ENCODE measurements at regions of chr14 and their contacts with region 1.

Region 1: GRCh38 chr14:24108336-24108874 is 6.2 kb upstream of the DCAF11 start:
- DNase-seq: no peak
- ATAC-seq: peak; percentile 25
- H3K4me3 ChIP-seq: no peak overlapping the region
- H3K4me3 Mint-ChIP-seq: peak overlapping the region; percentile 83
- H3K27ac ChIP-seq: peak overlapping the region; percentile 28 to 39
- H3K27ac Mint-ChIP-seq: peak overlapping the region; percentile 95
- H3K4me1 ChIP-seq: peaks cover 20% of the 10 kb centered on the region
- H3K4me1 Mint-ChIP-seq: peaks cover 10% of the 10 kb centered on the region
- H3K27me3 ChIP-seq: no peaks in the 10 kb centered on the region
- H3K27me3 Mint-ChIP-seq: no peaks in the 10 kb centered on the region
- CTCF ChIP-seq: no peak

Region 2: DNA sequence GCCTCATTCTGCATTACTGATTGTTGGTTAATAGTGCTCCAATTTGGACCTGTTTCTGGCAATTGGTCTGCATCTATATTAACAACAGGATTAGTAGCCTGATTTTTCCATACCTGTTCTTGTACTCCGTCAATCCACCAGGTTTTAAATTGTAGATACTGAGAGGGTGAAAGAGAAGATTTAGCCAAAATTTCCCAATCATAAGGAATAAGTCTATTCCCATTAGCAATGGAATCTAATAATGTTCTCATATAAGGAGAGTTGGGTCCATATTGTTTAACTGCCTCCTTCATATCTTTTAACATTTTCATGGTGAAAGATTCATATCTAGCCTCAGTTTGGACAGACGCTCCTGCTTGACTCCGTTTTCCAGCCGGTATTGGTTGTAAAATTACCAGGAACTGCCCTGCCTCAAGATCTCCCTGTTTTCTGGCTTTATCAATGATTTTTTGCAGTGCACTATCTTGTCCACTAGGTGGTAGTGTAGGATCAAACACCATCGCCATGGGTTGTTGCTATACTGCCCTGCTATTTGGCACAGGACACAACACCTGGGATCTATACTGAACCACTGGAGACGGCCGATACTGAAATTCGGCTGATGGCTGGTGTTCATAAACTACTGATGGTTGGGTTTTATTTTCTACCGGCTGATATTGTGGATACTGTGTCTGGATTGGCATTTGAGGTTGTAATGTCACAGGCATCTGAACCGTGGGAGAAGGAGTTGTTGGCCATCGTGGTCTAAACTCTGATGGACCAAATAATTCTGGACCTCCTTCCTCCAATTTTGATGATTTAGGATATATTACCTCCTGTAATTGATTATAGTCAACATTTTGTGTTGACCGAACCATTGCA is 94.5 kb before region 1 on chr14:
- CTCF ChIA-PET with region 1: interaction called, 11 read pairs
- POLR2A ChIA-PET with region 1: interaction called, 9 read pairs
- intact Hi-C with region 1: loop called (anchors 1 kb)
- DNase-seq: peak in 12 of 14 experiments; percentile 9 to 85 (median 32)
- ATAC-seq: peak; percentile 98
- H3K4me3 ChIP-seq: no peak overlapping the region
- H3K4me3 Mint-ChIP-seq: no peak overlapping the region
- H3K27ac ChIP-seq: no peak overlapping the region
- H3K27ac Mint-ChIP-seq: no peak overlapping the region
- H3K4me1 ChIP-seq: peaks cover 11% of the 10 kb centered on the region
- H3K4me1 Mint-ChIP-seq: peaks cover 25% of the 10 kb centered on the region
- H3K27me3 ChIP-seq: no peaks in the 10 kb centered on the region
- H3K27me3 Mint-ChIP-seq: no peaks in the 10 kb centered on the region
- CTCF ChIP-seq: peak; percentile 92

Region 3: DNA sequence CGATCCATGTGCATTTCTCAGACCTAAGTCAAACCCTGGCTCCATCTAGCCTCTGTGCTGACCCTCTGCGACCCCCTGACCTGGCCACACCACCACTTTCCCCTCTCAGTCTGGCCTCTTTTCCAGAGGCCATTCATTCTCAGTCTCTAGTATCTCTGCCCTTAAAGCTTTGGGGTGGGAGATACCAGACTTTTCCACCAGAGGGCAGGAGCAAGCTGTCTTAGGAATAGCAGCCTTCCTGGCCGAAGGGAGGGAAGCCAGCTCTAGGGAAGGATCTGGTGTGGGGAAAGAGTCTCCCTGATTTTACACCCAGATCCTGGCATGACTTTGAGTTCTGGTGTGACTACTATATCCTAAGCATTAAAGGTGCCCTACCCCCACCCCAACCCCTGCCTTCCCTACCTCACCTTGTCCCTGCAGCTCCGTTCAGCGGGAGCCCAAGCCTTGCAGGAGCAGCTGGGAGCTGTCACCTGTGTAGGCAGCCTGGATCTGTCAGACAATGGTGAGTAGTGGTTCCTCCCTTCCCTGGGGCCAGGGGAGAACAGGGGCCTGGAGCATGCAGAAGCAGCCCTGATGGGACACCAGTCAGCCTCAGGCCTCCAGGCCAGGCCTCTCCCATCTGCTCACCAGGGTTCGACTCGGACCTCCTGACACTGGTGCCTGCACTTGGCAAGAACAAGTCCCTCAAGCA is 50.0 kb before region 1 on chr14:
- CTCF ChIA-PET with region 1: interaction called, 5 read pairs
- POLR2A ChIA-PET with region 1: interaction called, 22 read pairs
- intact Hi-C with region 1: loop called (anchors 1 kb)
- DNase-seq: peak in 6 of 14 experiments; percentile 30 to 82 (median 48)
- ATAC-seq: peak; percentile 83
- H3K4me3 ChIP-seq: no peak overlapping the region
- H3K4me3 Mint-ChIP-seq: no peak overlapping the region
- H3K27ac ChIP-seq: no peak overlapping the region
- H3K27ac Mint-ChIP-seq: no peak overlapping the region
- H3K4me1 ChIP-seq: peaks cover 2% of the 10 kb centered on the region
- H3K4me1 Mint-ChIP-seq: no peaks in the 10 kb centered on the region
- H3K27me3 ChIP-seq: peaks cover 0 to 10% of the 10 kb centered on the region in 2 experiments
- H3K27me3 Mint-ChIP-seq: peaks cover 10% of the 10 kb centered on the region
- CTCF ChIP-seq: peak; percentile 70

Region 4: GRCh38 chr14:24093901-24094761 is 14.3 kb before region 1 on chr14 and contains the start of gene PCK2:
- CTCF ChIA-PET with region 1: interaction called, 63 read pairs
- POLR2A ChIA-PET with region 1: interaction called, 72 read pairs
- intact Hi-C with region 1: loop called (anchors 1 to 2 kb)
- DNase-seq: peak; percentile 53 to 82 (median 67)
- ATAC-seq: peak; percentile 77
- H3K4me3 ChIP-seq: peak within 1 kb of the TSS; percentile 97
- H3K4me3 Mint-ChIP-seq: peak within 1 kb of the TSS; percentile 97
- H3K27ac ChIP-seq: peak within 1 kb of the TSS; percentile 71 to 78
- H3K27ac Mint-ChIP-seq: peak within 1 kb of the TSS; percentile 90
- H3K4me1 ChIP-seq: peaks cover 29% of the 10 kb centered on the region
- H3K4me1 Mint-ChIP-seq: peaks cover 37% of the 10 kb centered on the region
- H3K27me3 ChIP-seq: no peaks in the 10 kb centered on the region
- H3K27me3 Mint-ChIP-seq: no peaks in the 10 kb centered on the region
- CTCF ChIP-seq: no peak
- total RNA-seq, gene PCK2: 5.2 to 7.4 TPM

Region 5: DNA sequence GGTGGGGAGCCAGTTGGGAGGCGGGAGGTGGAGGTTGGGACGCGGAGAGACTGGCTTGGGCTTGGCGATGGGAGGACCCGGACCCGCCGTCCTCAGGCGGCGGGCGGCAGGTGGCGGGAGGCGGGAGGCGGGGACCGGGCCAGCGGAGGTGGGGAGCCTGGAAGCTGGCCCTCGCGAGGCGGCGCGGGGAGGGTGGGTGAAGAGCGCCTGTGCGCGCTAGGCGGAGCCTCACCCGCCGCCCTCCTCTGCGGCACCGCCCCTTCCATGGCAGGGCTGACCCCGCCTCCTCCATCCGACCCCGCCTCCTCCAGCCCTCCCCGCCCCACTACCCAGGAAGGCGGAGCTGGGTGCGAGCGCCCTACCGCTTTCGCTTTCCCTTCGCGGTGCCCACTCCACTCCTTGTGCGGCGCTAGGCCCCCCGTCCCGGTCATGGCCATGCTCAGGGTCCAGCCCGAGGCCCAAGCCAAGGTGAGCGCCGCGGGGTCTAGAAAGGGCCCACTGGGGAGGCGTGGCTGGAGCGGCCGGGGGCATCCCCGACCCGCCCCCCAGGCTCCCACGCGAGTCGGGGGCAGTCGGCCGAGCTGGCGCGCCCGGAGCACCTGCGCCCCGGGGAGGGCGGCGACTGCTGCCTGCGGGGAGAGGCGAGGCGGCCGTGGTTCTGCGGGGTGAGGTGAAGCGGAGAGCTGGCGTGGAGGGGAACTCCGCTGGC is 27.6 kb after region 1 on chr14 and contains the start of gene PSME1:
- CTCF ChIA-PET with region 1: interaction called, 11 read pairs
- POLR2A ChIA-PET with region 1: interaction called, 296 read pairs
- intact Hi-C with region 1: no loop called
- DNase-seq: peak; percentile 89 to 97 (median 95)
- ATAC-seq: peak; percentile 97
- H3K4me3 ChIP-seq: peak within 1 kb of the TSS; percentile 74
- H3K4me3 Mint-ChIP-seq: peak within 1 kb of the TSS; percentile 94
- H3K27ac ChIP-seq: peak within 1 kb of the TSS; percentile 72 to 88
- H3K27ac Mint-ChIP-seq: peak within 1 kb of the TSS; percentile 85
- H3K4me1 ChIP-seq: peaks cover 68% of the 10 kb centered on the region
- H3K4me1 Mint-ChIP-seq: peaks cover 70% of the 10 kb centered on the region
- H3K27me3 ChIP-seq: no peaks in the 10 kb centered on the region
- H3K27me3 Mint-ChIP-seq: no peaks in the 10 kb centered on the region
- CTCF ChIP-seq: no peak
- total RNA-seq, gene PSME1: 166 to 171 TPM

Region 6: DNA sequence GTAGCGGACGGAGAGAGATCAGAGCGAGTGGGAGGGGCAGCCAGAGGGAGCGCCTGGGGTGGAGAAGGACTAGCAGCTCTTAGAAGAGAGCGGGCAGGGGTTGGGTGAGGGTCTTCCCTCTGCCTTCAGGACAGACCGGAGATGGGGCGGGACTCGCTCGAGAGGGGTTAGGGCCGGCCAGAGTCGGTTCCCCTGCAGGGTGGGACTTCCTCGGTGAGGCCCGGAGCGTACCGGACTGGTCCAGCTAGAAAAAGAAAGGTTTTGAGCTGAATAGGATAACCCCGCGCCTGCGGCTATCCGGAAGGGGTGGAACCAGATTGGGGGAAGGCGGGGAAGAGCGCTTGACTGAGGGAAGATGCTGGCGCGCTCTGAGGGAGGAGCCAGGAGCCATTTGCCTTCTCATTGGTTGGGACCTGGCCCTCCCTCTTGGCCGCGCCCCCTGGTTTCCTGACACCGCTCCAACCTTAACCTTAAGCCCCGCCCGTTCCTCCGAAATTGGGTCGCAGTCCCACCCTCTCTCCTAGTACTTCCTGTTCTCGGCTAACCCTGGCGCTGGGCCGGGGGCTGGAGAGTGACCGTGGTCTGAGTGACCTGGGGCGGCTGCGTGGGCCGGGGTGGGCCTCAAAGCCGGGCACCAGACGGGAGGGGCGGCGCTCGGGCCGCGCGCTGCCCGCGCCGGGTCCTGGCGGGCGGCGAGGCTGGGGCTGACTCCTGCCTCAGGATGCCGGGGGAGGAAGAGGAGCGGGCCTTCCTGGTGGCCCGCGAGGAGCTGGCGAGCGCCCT is 38.8 kb after region 1 on chr14 and contains the start of gene RNF31:
- CTCF ChIA-PET with region 1: interaction called, 15 read pairs
- POLR2A ChIA-PET with region 1: interaction called, 119 read pairs
- intact Hi-C with region 1: no loop called
- DNase-seq: peak; percentile 91 to 99 (median 97)
- ATAC-seq: peak; percentile 91
- H3K4me3 ChIP-seq: peak within 1 kb of the TSS; percentile 93
- H3K4me3 Mint-ChIP-seq: peak within 1 kb of the TSS; percentile 99
- H3K27ac ChIP-seq: peak within 1 kb of the TSS; percentile 76 to 82
- H3K27ac Mint-ChIP-seq: peak within 1 kb of the TSS; percentile 90
- H3K4me1 ChIP-seq: peaks cover 65% of the 10 kb centered on the region
- H3K4me1 Mint-ChIP-seq: peaks cover 61% of the 10 kb centered on the region
- H3K27me3 ChIP-seq: no peaks in the 10 kb centered on the region
- H3K27me3 Mint-ChIP-seq: no peaks in the 10 kb centered on the region
- CTCF ChIP-seq: no peak
- total RNA-seq, gene RNF31: 46.0 to 57.8 TPM

Region 7: GRCh38 chr14:25006961-25007795 is 898.8 kb after region 1 on chr14:
- CTCF ChIA-PET with region 1: no interaction called
- POLR2A ChIA-PET with region 1: no interaction called
- intact Hi-C with region 1: no loop called
- DNase-seq: no peak
- ATAC-seq: no peak
- H3K4me3 ChIP-seq: no peak overlapping the region
- H3K4me3 Mint-ChIP-seq: no peak overlapping the region
- H3K27ac ChIP-seq: no peak overlapping the region
- H3K27ac Mint-ChIP-seq: no peak overlapping the region
- H3K4me1 ChIP-seq: no peaks in the 10 kb centered on the region
- H3K4me1 Mint-ChIP-seq: no peaks in the 10 kb centered on the region
- H3K27me3 ChIP-seq: peaks cover 4 to 9% of the 10 kb centered on the region in 2 experiments
- H3K27me3 Mint-ChIP-seq: peaks cover 17% of the 10 kb centered on the region
- CTCF ChIP-seq: no peak